ENCODE measurements at regions of chr3 and their contacts with region 1.

Region 1: GRCh38 chr3:171829841-171830517 is 13.2 kb upstream of the TMEM212 start:
- DNase-seq: no peak
- ATAC-seq: peak; percentile 98
- H3K4me3 ChIP-seq: no peak overlapping the region
- H3K27ac ChIP-seq: no peak overlapping the region
- H3K4me1 ChIP-seq: peaks cover 3 to 8% of the 10 kb centered on the region in 2 experiments; a peak in 2 of 4 replicates
- H3K27me3 ChIP-seq: no peaks in the 10 kb centered on the region
- CTCF ChIP-seq: peak; percentile 76 to 86 (median 80)
- POLR2A ChIP-seq: no peak
- RAD21 ChIP-seq: peak; percentile 84

Region 2: DNA sequence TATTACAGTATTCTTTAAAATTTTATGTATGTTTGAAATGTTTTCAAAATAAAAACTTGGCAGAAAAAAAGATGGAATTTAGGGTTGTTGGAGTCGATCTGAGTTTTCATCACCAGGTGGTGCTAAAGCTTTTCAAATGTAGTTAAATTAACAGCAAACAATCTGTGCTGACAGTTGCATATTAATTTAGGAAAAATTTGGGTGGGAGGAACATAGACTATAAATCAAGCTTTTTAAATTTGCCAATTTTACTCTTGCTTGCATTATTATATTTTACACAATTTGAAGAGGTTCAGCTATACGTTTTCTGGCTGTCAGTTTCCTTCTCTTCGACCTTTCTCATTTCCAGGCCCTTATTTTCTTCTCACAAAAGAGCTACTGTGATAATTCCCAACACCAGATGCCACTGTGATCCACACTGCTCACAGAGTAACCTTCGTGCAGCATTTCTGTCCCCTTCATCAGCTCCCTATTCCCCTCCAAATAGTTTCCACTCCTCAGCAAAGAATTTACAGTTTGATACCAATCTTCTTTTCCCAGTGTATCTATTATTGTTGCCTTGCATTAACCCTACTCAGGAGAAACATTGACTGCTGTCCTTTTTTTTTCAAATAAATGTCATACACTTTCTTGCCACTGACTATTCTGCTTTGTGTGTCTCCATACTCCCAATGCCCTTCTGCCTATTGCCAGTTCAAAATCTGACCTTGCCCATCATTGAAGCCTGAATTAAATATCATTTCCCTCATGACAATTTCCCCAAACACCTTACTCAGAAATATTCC is 868.2 kb before region 1 on chr3:
- CTCF ChIA-PET with region 1: interaction called, 27 read pairs
- POLR2A ChIA-PET with region 1: no interaction called
- RAD21 ChIA-PET with region 1: interaction called, 3 to 5 read pairs
- intact Hi-C with region 1: loop called (anchors 2 kb)
- DNase-seq: peak; percentile 34
- ATAC-seq: peak; percentile 55
- H3K4me3 ChIP-seq: no peak overlapping the region
- H3K27ac ChIP-seq: no peak overlapping the region
- H3K4me1 ChIP-seq: no peaks in the 10 kb centered on the region
- H3K27me3 ChIP-seq: no peaks in the 10 kb centered on the region
- CTCF ChIP-seq: peak; percentile 37 to 85 (median 73)
- POLR2A ChIP-seq: no peak
- RAD21 ChIP-seq: peak; percentile 79

Region 3: DNA sequence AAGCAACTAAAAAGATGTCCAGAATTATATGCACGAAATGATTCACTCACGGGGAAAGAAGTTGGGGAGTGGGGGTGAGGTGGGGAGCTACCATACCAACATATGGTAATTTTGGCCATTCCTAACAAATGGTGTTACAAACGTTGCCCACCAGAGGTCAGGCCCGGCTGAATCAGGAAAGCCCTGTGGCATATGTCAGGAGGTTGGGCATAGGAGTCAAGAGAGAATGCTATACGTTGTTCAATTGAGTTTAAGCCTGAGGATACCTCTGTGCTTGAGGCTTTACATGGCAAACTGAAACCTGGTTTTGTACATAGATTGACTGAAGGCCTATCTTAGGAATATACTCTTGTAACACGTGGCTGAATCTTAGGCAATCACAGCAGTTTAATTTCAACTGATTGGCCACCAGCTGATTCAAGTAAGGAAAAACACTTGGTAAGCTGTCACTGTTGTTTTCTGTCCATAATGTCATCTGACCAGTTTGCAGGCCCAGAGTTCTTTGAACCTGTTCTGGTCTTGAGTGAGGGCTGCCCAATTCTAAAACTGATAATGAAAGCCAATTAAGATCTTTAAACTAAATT is 780.0 kb before region 1 on chr3:
- CTCF ChIA-PET with region 1: interaction called, 12 read pairs
- POLR2A ChIA-PET with region 1: no interaction called
- RAD21 ChIA-PET with region 1: no interaction called
- intact Hi-C with region 1: loop called (anchors 2 kb)
- DNase-seq: peak; percentile 45
- ATAC-seq: peak; percentile 96
- H3K4me3 ChIP-seq: no peak overlapping the region
- H3K27ac ChIP-seq: no peak overlapping the region
- H3K4me1 ChIP-seq: peaks cover under 1 to 4% of the 10 kb centered on the region in 2 experiments
- H3K27me3 ChIP-seq: no peaks in the 10 kb centered on the region
- CTCF ChIP-seq: peak; percentile 62 to 77 (median 68); a peak in 5 of 6 replicates
- POLR2A ChIP-seq: no peak
- RAD21 ChIP-seq: peak; percentile 90

Region 4: GRCh38 chr3:171187706-171188290 is 642.2 kb before region 1 on chr3:
- CTCF ChIA-PET with region 1: interaction called, 3 read pairs
- POLR2A ChIA-PET with region 1: no interaction called
- RAD21 ChIA-PET with region 1: no interaction called
- intact Hi-C with region 1: loop called (anchors 5 kb)
- DNase-seq: no peak
- ATAC-seq: peak; percentile 57
- H3K4me3 ChIP-seq: no peak overlapping the region
- H3K27ac ChIP-seq: no peak overlapping the region
- H3K4me1 ChIP-seq: peaks cover 24 to 30% of the 10 kb centered on the region in 2 experiments
- H3K27me3 ChIP-seq: no peaks in the 10 kb centered on the region
- CTCF ChIP-seq: peak; percentile 59 to 72 (median 71); a peak in 5 of 6 replicates
- POLR2A ChIP-seq: no peak
- RAD21 ChIP-seq: peak; percentile 87

Region 5: GRCh38 chr3:171566803-171567422 is 263.1 kb before region 1 on chr3:
- CTCF ChIA-PET with region 1: interaction called, 4 read pairs
- POLR2A ChIA-PET with region 1: no interaction called
- RAD21 ChIA-PET with region 1: no interaction called
- intact Hi-C with region 1: loop called (anchors 10 kb)
- DNase-seq: peak; percentile 28
- ATAC-seq: peak; percentile 69
- H3K4me3 ChIP-seq: no peak overlapping the region
- H3K27ac ChIP-seq: no peak overlapping the region
- H3K4me1 ChIP-seq: no peaks in the 10 kb centered on the region
- H3K27me3 ChIP-seq: no peaks in the 10 kb centered on the region
- CTCF ChIP-seq: peak; percentile 53 to 82 (median 72)
- POLR2A ChIP-seq: no peak
- RAD21 ChIP-seq: peak; percentile 95

Region 6: DNA sequence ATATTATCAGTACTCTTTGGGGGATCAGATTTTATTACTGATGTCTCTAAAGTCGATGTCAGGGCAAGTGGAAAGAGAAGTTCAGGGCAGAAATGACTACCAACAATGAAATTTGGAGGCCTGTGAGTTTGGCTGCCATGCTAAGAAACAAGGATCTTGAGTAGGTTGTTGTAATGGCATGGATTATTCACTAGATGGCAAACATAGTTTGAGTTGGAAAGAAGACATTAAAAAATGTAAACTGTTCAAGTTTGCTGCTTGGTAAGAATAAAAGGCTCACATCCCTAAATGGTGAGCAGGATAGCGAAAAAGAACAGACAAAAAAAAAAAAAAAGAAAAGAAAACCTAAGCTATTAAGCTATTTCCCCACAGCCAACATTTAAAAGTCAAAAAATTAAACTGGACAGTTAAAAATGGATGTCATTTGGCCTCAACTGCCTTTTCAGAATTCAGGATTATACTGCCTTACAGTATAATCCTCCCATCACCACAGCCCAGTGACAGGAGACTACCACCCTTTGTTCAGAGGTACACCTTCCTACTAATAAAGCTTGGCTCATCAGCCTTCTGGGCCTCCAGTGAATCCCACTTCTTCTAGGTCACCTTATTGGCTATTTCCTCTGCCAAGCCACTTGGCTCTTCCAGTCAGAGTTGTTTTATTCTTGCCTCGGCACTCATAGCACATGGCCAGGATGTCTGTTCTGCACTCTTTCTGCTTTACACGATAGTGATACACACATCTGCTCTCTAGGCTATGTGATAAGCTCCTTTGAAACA is 183.4 kb before region 1 on chr3:
- CTCF ChIA-PET with region 1: interaction called, 8 read pairs
- POLR2A ChIA-PET with region 1: no interaction called
- RAD21 ChIA-PET with region 1: interaction called in 1 of 2 experiments, 4 read pairs
- intact Hi-C with region 1: loop called (anchors 2 kb)
- DNase-seq: peak; percentile 36
- ATAC-seq: peak; percentile 49; the same call in 1 of the 2 replicates
- H3K4me3 ChIP-seq: no peak overlapping the region
- H3K27ac ChIP-seq: no peak overlapping the region
- H3K4me1 ChIP-seq: no peaks in the 10 kb centered on the region
- H3K27me3 ChIP-seq: no peaks in the 10 kb centered on the region
- CTCF ChIP-seq: peak; percentile 45 to 69 (median 58)
- POLR2A ChIP-seq: no peak
- RAD21 ChIP-seq: peak; percentile 79

Region 7: DNA sequence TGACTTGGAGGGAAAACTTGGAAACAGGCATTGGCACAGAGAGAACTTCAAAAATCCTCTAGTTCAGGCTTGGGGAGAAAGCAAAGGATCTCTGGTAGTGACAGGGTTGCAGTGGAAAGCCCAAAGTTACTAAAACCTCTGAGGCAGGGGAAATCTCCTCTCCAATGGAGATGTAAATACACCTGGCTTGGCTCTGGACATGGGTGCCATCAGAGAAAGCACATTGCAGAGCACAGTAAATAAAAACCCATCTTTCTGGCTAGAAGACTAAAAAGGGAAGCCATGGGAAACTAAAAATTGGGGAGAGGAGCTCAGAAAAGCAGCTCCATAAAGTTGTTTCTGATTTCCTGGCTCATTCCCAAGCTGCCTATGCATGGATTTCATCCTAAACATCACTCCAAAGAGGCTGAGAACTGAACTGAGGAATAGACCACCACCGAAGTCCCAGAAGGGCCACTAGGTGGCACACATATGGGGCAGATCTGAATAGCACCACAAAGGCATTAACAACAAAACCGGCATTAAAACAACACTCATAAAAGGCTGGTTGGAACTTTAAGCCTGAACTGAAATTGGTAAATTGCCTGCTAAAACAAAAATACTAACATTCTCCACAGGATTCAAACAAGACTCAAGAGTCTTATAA is 126.1 kb before region 1 on chr3:
- CTCF ChIA-PET with region 1: interaction called, 4 read pairs
- POLR2A ChIA-PET with region 1: no interaction called
- RAD21 ChIA-PET with region 1: no interaction called
- intact Hi-C with region 1: loop called (anchors 1 kb)
- DNase-seq: peak; percentile 28
- ATAC-seq: peak; percentile 94
- H3K4me3 ChIP-seq: no peak overlapping the region
- H3K27ac ChIP-seq: no peak overlapping the region
- H3K4me1 ChIP-seq: no peaks in the 10 kb centered on the region
- H3K27me3 ChIP-seq: no peaks in the 10 kb centered on the region
- CTCF ChIP-seq: peak; percentile 64 to 76 (median 73); a peak in 5 of 6 replicates
- POLR2A ChIP-seq: no peak
- RAD21 ChIP-seq: peak; percentile 59

Region 8: DNA sequence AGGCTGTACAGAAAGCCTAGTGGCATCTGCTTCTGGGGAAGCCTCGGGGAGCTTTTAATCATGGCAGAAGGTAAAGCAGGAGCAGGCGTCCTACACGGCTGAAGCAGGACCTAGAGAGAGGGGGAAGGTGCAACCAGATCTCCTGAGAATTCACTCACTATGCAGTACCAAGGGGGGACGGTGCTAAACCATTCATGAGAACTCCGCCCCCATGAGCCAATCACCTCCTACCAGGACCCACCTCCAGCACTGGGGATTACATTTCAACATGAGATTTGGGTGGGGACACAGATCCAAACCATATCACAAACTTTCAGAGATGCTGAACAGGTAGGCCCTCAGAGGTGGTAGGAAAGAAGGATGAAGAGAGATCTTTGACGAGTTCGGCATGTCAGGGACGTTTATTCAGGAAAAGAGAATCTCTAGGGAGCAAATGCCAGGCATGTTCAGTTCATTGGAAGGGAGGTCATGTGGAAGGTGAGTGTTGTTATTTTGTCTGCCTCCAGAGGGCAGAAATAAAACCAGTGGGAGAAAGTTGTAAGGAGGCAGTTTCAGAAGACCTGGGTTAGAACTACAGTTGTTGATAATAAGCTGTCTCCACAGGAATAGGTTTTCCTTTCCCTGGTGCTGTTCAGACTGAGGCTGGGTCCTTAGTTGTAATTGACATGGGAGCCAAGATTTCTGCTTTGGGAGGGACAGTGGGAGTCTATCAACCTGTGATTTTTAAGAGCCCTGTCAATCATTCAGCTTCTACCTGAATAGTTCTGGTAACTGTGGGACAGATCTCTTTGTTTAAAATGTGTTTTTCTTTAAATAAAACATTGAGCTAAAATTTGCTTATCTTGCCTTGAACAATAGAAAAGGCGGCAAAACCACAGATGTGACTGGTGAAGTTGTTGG is 205.1 kb after region 1 on chr3:
- CTCF ChIA-PET with region 1: no interaction called
- POLR2A ChIA-PET with region 1: no interaction called
- RAD21 ChIA-PET with region 1: no interaction called
- intact Hi-C with region 1: no loop called
- DNase-seq: peak; percentile 37
- ATAC-seq: peak; percentile 50
- H3K4me3 ChIP-seq: no peak overlapping the region
- H3K27ac ChIP-seq: no peak overlapping the region
- H3K4me1 ChIP-seq: peaks cover 8 to 22% of the 10 kb centered on the region in 2 experiments
- H3K27me3 ChIP-seq: no peaks in the 10 kb centered on the region
- CTCF ChIP-seq: peak in 2 of 3 experiments; percentile 47 to 56; a peak in 5 of 6 replicates
- POLR2A ChIP-seq: no peak
- RAD21 ChIP-seq: peak; percentile 61

Region 9: GRCh38 chr3:172129870-172130683 is 300.1 kb after region 1 on chr3:
- CTCF ChIA-PET with region 1: no interaction called
- POLR2A ChIA-PET with region 1: no interaction called
- RAD21 ChIA-PET with region 1: no interaction called
- intact Hi-C with region 1: no loop called
- DNase-seq: peak; percentile 91
- ATAC-seq: peak; percentile 94
- H3K4me3 ChIP-seq: no peak overlapping the region; a peak in 1 of 4 replicates
- H3K27ac ChIP-seq: peak overlapping the region; percentile 18; the same call in 1 of the 2 replicates
- H3K4me1 ChIP-seq: peaks cover 33 to 34% of the 10 kb centered on the region in 2 experiments
- H3K27me3 ChIP-seq: no peaks in the 10 kb centered on the region
- CTCF ChIP-seq: no peak
- POLR2A ChIP-seq: no peak
- RAD21 ChIP-seq: no peak

Region 10: DNA sequence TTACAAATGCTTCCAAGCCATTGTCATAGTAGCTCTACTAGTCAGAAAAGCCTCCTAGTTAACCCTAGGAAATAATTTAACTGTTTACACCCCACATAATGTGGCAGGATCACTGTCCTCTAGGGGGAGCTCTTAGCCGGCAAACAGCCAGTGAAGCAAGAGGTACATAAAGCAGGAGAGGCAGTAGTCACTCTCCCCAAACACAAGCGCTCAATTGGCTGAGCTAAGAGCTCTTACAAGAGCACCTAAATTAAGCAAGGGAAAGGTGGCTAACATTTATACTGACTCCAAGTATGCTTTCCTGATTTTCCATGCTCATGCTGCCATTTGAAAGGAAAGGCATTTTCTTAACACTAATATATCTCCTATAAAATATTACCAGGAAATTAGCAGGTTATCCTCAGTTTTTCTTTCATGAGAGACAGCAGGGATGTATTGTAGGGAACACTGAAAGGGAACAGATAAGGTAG is 843.3 kb after region 1 on chr3:
- CTCF ChIA-PET with region 1: no interaction called
- POLR2A ChIA-PET with region 1: no interaction called
- RAD21 ChIA-PET with region 1: no interaction called
- intact Hi-C with region 1: no loop called
- DNase-seq: peak; percentile 66
- ATAC-seq: peak; percentile 97
- H3K4me3 ChIP-seq: no peak overlapping the region
- H3K27ac ChIP-seq: no peak overlapping the region
- H3K4me1 ChIP-seq: peaks cover 0 to 12% of the 10 kb centered on the region in 2 experiments; a peak in 3 of 4 replicates
- H3K27me3 ChIP-seq: no peaks in the 10 kb centered on the region
- CTCF ChIP-seq: peak; percentile 81 to 90 (median 83)
- POLR2A ChIP-seq: no peak
- RAD21 ChIP-seq: peak; percentile 89